Activated naive CD4-positive, alpha-beta T cell treated with anti-CD3 and anti-CD28 coated beads, Interleukin-2, amount 10 ng/mL, durations not matched to agents 7 days and 5 days (primary cell): ENCODE measurements at regions of chr20 and their contacts with region 1.

Region 1: DNA sequence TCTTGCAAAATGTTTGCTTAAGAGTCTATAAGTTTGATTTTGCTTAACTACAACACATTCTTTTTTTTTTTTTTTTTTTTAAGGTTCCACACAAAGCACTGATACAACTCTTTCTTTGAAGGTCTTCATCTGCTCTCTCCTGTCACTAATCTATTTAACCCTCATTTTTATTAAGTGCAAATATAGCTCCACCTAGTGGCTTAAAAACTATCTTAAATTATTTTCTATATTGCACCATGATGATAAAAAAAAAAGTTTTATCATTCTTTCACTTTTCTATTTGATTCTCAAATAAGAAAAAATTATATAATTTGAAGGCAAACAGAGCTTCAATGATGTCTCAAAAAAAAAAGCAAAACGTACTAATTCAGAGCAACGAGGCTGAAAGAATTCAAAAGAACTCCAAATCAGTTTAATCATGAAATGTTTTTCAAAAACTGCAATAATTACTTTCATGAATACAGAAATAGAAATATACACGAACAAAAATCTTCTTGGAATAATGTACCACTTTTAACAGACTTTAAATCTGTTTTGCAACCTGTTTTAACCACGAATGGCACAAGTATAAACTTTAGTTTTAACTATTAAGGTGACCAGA is 12.8 kb downstream of the ESF1 start:
- DNase-seq: no peak
- H3K4me3 Mint-ChIP-seq: no peak overlapping the region
- H3K27ac Mint-ChIP-seq: no peak overlapping the region
- H3K4me1 Mint-ChIP-seq: no peaks in the 10 kb centered on the region
- H3K27me3 Mint-ChIP-seq: no peaks in the 10 kb centered on the region

Region 2: DNA sequence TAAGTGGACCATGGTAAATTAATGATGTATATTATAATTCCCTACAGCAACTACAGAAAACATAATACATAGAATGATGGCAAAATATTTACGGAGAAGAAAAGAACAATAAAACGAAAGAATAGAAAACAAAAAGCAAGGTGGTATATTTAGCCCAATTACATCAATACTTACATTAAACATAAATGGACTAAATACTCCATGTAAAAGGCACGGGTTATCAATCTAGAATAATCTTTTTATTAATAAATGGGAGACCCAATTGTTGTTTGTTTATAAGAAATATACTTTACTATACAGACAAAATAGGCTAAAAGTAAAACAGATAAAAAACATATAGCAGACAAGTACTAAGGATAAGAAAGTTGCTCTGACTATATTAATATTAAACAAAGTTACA is 270.5 kb before region 1 on chr20:
- CTCF ChIA-PET with region 1: no interaction called
- DNase-seq: no peak
- H3K4me3 Mint-ChIP-seq: no peak overlapping the region
- H3K27ac Mint-ChIP-seq: no peak overlapping the region
- H3K4me1 Mint-ChIP-seq: no peaks in the 10 kb centered on the region
- H3K27me3 Mint-ChIP-seq: no peaks in the 10 kb centered on the region

Region 3: GRCh38 chr20:13788167-13788834 is 16.3 kb after region 1 on chr20:
- CTCF ChIA-PET with region 1: interaction called, 10 read pairs
- DNase-seq: peak; percentile 61
- H3K4me3 Mint-ChIP-seq: no peak overlapping the region
- H3K27ac Mint-ChIP-seq: peak overlapping the region; percentile 38
- H3K4me1 Mint-ChIP-seq: peaks cover 36% of the 10 kb centered on the region
- H3K27me3 Mint-ChIP-seq: no peaks in the 10 kb centered on the region

Region 4: DNA sequence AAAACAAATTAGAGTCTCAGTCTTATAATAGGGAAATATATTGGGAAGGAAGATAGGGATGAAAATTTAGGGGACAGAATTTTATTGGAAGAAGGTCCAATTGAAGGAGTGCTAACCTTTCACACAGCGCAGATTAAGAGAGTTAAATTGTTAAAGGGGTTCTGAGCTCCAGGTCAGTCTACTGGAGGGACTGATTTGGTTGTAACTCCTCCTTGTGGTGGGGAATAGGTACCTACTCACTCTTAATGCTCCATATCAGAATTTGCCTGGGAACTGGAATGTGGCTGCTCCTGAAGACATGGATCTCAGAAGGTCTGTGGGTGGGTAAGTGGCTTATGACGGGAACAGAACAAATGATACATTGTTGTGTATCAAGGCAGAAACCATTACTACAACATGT is 421.9 kb after region 1 on chr20:
- CTCF ChIA-PET with region 1: no interaction called
- DNase-seq: no peak
- H3K4me3 Mint-ChIP-seq: no peak overlapping the region
- H3K27ac Mint-ChIP-seq: no peak overlapping the region
- H3K4me1 Mint-ChIP-seq: no peaks in the 10 kb centered on the region
- H3K27me3 Mint-ChIP-seq: no peaks in the 10 kb centered on the region